ENCODE measurements at regions of chr9 and their contacts with region 1.

Region 1: GRCh38 chr9:112361601-112362000 is 18.3 kb upstream of the HSDL2 start:
- DNase-seq: no peak
- ATAC-seq: peak in 1 of 2 donors; percentile 43
- H3K4me3 ChIP-seq: no peak overlapping the region
- H3K27ac ChIP-seq: no peak overlapping the region
- H3K4me1 ChIP-seq: no peaks in the 10 kb centered on the region
- H3K27me3 ChIP-seq: no peaks in the 10 kb centered on the region

Region 2: GRCh38 chr9:111866976-111867375 is 494.6 kb before region 1 on chr9:
- intact Hi-C with region 1: no loop called
- DNase-seq: no peak
- ATAC-seq: no peak
- H3K4me3 ChIP-seq: no peak overlapping the region
- H3K27ac ChIP-seq: no peak overlapping the region
- H3K4me1 ChIP-seq: no peaks in the 10 kb centered on the region
- H3K27me3 ChIP-seq: no peaks in the 10 kb centered on the region

Region 3: DNA sequence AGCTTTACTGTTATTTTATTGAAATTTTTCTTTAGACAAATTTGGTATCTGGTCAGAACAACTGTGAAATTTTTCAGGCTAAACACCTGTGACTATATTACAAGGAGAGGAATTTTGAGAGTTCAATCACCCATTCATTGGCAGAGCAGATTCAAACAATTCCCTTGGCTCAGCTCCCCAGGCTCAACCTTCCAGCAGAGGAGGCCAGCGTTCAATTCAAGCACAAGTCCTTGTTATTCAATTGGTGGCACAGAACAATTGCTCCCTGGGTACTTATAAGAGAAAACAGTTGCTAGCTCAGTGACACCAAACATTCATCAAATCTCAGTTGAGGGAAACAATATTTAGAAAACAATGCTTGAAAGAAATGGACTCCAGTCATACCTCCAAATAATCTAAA is 269.8 kb before region 1 on chr9:
- intact Hi-C with region 1: loop called (anchors 5 kb)
- DNase-seq: peak in 1 of 3 donors; percentile 41
- ATAC-seq: no peak
- H3K4me3 ChIP-seq: no peak overlapping the region
- H3K27ac ChIP-seq: no peak overlapping the region
- H3K4me1 ChIP-seq: no peaks in the 10 kb centered on the region
- H3K27me3 ChIP-seq: no peaks in the 10 kb centered on the region

Region 4: GRCh38 chr9:112097712-112098688 is 263.6 kb before region 1 on chr9:
- intact Hi-C with region 1: loop called (anchors 5 kb)
- DNase-seq: peak; percentile 41 to 75 (median 67)
- ATAC-seq: peak; percentile 54 to 79
- H3K4me3 ChIP-seq: no peak overlapping the region
- H3K27ac ChIP-seq: no peak overlapping the region
- H3K4me1 ChIP-seq: no peaks in the 10 kb centered on the region
- H3K27me3 ChIP-seq: no peaks in the 10 kb centered on the region

Region 5: DNA sequence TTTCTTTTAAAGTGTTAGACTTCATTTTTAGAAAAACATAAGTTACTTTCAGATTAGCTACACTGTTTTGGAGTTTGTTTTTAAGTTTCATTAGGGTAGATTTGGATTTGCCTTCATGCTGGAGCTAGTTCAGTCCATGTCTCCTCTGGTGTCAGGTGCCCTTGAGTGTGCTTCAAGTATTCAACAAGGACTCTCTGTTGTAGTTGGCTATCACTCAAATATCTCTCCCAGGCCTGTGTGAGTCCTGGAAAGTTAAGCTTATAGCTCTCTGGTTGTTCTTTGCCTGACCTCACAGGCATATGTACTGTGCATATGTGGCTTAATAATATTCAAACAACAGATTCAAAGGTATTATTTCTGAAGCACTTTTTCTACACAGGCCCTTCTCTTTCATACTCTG is 73.6 kb before region 1 on chr9:
- intact Hi-C with region 1: no loop called
- DNase-seq: no peak
- ATAC-seq: peak; percentile 47 to 78
- H3K4me3 ChIP-seq: no peak overlapping the region
- H3K27ac ChIP-seq: no peak overlapping the region
- H3K4me1 ChIP-seq: peaks cover 2% of the 10 kb centered on the region
- H3K27me3 ChIP-seq: no peaks in the 10 kb centered on the region

Region 6: DNA sequence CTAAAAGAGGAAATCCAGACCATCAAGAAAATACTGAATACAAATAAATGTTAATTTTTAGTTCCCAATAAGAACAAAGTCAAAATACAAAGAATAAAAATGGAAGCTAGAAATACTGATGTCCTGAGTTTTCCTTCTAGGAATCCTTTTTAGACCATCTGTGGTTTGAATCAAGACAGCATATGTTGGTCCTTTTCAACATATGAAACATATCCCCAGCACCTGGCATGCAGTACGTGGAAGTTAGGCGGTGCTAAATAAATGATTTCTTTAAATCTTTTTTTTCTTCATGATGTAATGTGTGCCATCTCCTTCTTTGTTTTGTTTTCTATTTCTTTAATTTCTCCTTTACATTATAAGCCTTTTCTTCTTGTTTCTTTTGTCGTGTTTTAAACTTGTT is 159.1 kb after region 1 on chr9:
- intact Hi-C with region 1: no loop called
- DNase-seq: no peak
- ATAC-seq: no peak
- H3K4me3 ChIP-seq: no peak overlapping the region
- H3K27ac ChIP-seq: no peak overlapping the region
- H3K4me1 ChIP-seq: no peaks in the 10 kb centered on the region
- H3K27me3 ChIP-seq: no peaks in the 10 kb centered on the region

Measured in right cardiac atrium (tissue), 5 donors.